ENCODE measurements at regions of chr1 and their contacts with region 1.

Region 1: GRCh38 chr1:3410142-3410925 is 44.1 kb upstream of the ARHGEF16 start:
- DNase-seq: peak; percentile 39 to 70
- ATAC-seq: peak; percentile 64 to 72 (median 68)
- H3K4me3 ChIP-seq: no peak overlapping the region
- H3K27ac ChIP-seq: no peak overlapping the region
- H3K4me1 ChIP-seq: no peaks in the 10 kb centered on the region
- H3K27me3 ChIP-seq: peaks cover 0 to 22% (median 6%) of the 10 kb centered on the region in 3 donors
- CTCF ChIP-seq: peak; percentile 60

Region 2: GRCh38 chr1:3012456-3013291 is 397.7 kb before region 1 on chr1:
- intact Hi-C with region 1: loop called in 1 of 2 experiments (anchors 1 kb)
- DNase-seq: peak; percentile 57 to 73
- ATAC-seq: peak; percentile 69 to 86 (median 75)
- H3K4me3 ChIP-seq: no peak overlapping the region
- H3K27ac ChIP-seq: no peak overlapping the region
- H3K4me1 ChIP-seq: no peaks in the 10 kb centered on the region
- H3K27me3 ChIP-seq: peaks cover 0 to 77% (median 5%) of the 10 kb centered on the region in 3 donors
- CTCF ChIP-seq: peak; percentile 86

Measured in psoas muscle (tissue), 8 donors.